Left ventricle myocardium superior (tissue), 1 donor: ENCODE measurements at regions of chr15 and their contacts with region 1.

Region 1: DNA sequence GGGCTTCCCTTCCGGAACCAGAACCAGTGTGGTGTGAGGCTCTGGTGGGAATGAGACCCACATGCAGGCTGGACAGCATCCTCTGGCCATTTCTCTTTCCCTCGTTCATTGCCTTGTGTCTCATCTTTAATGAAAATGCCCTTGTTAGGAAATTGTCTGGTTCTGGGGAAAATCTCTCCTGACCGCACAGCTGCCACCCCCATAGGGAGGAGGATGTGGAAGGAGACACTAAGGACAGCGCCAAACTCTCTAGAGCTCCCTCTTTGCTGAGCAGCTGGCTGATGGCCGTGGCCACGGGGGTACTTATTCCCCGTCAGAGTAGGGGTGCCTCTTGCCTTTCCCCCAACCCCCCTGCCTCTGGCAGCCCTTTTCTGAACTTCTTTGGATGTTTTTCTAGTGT is 297.6 kb upstream of the C2CD4B start:
- DNase-seq: no peak
- ATAC-seq: peak; percentile 55

Region 2: GRCh38 chr15:62320259-62320658 is 142.5 kb before region 1 on chr15:
- intact Hi-C with region 1: no loop called
- DNase-seq: no peak
- ATAC-seq: no peak

Region 3: DNA sequence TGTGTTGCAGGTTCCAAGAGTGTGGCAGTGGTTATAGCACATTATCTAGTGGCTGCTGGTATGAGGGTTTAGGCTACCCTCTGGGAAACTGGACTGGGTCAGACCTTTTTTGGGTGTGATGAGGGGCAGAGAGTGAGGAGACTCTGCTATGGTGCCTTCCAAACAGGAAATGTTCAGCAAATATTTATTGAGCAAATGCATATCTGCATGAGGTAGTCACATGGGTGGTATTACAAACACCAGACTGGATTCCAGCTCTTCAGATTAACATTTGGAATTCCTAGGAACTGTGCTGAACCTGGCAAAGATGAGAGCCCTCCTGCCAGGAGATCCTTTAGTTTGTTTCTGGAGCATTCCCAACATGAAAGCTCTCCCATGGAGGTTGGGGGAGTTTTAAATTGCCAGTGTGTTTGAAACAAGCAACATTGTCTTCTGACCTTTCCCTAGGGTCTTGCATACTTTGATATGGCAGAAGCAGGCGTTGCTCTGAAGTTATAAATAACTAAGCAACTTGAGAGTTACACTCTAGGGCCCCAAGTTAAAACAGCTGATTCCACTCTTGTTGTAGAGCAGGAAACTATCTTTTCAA is 43.6 kb after region 1 on chr15:
- intact Hi-C with region 1: loop called (anchors 2 kb)
- DNase-seq: no peak
- ATAC-seq: peak; percentile 73

Region 4: DNA sequence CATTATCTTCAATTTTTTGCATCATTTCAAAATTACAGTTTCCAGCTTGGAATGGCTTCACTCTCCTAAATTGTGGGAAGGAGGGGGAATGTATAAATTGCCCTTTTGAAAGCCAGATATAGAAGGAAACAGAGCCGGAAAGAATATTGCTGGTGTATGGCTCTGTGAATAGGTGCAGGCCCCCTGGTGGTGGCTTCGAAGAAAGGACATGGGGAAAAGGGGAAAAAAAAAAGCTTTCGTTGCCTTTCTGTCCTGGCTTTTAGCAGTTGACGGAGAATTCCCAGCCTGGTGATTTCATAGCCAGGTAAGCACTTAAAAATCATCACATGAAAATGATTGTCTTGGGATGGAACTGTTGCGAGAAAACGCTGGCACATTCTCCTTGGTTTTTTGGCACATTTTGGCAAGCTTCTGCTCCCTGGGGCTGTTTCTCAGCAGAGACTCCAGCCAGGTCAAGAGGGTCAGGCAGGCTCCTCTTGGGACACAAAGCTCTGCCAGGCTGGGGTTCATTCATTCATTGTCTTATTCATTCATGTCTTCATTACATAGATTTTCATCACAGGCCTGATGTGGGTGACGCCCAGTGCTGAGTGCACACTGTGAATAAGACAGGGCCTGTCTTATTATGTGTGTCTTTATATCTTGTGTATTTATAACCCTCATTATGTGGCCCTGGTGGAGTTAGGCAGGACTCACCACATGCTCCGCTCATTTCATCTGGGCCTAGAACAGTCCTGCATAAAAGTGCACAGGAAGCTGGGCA is 279.9 kb after region 1 on chr15:
- intact Hi-C with region 1: no loop called
- DNase-seq: peak; percentile 65
- ATAC-seq: peak; percentile 79